ENCODE measurements at regions of chr11 and their contacts with region 1.

Region 1: DNA sequence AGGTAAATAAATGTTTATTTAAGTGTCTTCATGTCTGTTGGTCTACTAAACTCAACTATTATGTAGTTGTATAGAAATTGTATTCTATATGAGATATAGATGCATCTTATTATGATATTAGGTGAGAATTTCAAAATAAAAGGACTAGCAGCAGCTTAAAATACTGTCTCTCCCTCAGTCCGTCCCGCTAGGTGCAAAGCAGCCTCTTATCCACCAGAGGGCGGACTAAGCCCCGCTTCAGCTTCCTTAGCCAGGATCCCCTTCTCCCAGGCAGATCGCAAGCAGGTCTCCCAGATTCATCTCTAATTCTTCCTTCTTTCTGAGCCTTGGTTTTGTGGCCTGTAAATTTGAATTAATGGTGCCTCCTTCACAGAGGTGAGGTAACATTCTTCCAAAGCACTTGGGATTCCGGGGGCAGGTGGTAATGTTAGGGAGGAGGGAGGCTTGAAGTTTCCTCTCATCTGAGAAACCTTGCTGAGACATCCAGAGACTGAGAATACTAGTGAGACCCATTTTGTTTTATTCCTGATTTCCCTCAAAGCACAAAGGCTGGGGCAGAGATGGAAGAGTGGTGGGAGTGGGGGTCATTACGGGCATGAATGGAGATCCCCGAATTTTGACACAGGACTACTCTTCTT is 13.5 kb upstream of the INSC start:
- DNase-seq: peak; percentile 70
- H3K4me3 Mint-ChIP-seq: no peak overlapping the region
- H3K27ac Mint-ChIP-seq: no peak overlapping the region
- H3K4me1 Mint-ChIP-seq: no peaks in the 10 kb centered on the region
- H3K27me3 Mint-ChIP-seq: peaks cover 34% of the 10 kb centered on the region

Region 2: DNA sequence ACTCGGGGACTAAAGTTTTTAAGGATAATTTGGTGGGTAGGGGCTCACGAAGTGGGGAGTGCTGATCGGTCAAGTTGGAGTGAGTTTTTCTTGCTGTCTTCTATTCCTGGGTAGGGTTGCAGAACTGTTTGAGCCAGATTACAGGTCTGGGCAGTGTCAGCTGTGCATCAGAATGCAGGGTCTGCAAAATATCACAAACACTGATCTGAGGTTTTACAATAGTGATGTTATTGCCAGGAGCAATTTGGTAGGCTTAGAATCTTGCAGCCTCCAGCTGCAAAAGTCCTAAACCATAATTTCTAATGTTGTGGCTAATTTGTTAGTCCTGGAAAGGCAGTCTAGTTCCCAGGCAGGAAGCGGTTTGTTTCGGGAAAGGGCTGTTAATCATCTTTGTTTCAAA is 89.4 kb before region 1 on chr11:
- CTCF ChIA-PET with region 1: no interaction called
- DNase-seq: no peak
- H3K4me3 Mint-ChIP-seq: no peak overlapping the region
- H3K27ac Mint-ChIP-seq: no peak overlapping the region
- H3K4me1 Mint-ChIP-seq: no peaks in the 10 kb centered on the region
- H3K27me3 Mint-ChIP-seq: peaks cover 23% of the 10 kb centered on the region

Region 3: GRCh38 chr11:15159085-15159484 is 57.9 kb after region 1 on chr11:
- CTCF ChIA-PET with region 1: interaction called, 31 read pairs
- DNase-seq: no peak
- H3K4me3 Mint-ChIP-seq: no peak overlapping the region
- H3K27ac Mint-ChIP-seq: no peak overlapping the region
- H3K4me1 Mint-ChIP-seq: no peaks in the 10 kb centered on the region
- H3K27me3 Mint-ChIP-seq: peaks cover 12% of the 10 kb centered on the region

Region 4: DNA sequence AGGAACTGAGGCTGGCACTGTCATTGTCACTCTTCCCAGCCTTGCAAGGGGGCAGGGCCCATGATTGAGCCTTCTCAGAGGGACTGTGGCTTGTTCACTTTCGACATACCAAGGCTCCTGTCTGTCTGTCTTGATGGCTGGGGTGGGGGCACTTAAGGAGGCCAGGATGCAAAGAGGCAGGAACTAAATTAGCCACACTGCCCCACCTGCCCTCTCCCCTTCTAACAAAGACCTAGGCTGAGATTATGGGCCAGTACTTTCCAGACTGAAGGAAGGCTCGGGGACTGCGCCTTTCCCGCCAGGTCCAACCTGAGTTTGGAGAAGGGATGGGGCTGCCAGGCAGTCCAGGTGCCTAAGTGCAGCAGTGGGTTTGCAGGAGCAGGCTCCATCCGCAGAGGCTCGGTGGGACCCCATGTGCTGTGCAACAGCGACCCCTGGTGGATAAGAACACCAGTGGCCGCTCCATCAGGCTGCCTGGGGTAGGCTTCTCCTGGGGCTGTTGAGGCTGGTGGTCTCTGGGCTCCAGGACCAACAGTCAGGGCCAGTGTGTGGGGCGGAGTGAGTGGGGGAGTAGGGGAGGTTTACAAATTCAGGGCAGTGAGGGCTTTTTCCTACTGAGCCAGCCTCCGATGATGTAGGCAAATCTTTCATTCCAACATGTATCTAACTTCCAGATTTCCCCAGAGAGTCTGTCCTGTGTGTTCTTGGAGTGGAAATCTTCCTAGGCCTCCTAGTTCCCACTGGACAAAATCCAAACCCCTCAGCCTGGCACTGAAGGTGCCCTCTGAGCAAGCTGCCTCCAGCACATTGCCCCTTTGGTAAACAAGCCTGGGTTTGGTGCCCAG is 107.4 kb after region 1 on chr11:
- CTCF ChIA-PET with region 1: interaction called, 83 read pairs
- DNase-seq: peak; percentile 83
- H3K4me3 Mint-ChIP-seq: no peak overlapping the region
- H3K27ac Mint-ChIP-seq: no peak overlapping the region
- H3K4me1 Mint-ChIP-seq: no peaks in the 10 kb centered on the region
- H3K27me3 Mint-ChIP-seq: peaks cover 35% of the 10 kb centered on the region

Measured in activated naive CD4-positive, alpha-beta T cell treated with anti-CD3 and anti-CD28 coated beads, Interleukin-2, amount 10 ng/mL, durations not matched to agents 7 days and 5 days (primary cell).